ENCODE measurements at regions of chr17 and their contacts with region 1.

Region 1: DNA sequence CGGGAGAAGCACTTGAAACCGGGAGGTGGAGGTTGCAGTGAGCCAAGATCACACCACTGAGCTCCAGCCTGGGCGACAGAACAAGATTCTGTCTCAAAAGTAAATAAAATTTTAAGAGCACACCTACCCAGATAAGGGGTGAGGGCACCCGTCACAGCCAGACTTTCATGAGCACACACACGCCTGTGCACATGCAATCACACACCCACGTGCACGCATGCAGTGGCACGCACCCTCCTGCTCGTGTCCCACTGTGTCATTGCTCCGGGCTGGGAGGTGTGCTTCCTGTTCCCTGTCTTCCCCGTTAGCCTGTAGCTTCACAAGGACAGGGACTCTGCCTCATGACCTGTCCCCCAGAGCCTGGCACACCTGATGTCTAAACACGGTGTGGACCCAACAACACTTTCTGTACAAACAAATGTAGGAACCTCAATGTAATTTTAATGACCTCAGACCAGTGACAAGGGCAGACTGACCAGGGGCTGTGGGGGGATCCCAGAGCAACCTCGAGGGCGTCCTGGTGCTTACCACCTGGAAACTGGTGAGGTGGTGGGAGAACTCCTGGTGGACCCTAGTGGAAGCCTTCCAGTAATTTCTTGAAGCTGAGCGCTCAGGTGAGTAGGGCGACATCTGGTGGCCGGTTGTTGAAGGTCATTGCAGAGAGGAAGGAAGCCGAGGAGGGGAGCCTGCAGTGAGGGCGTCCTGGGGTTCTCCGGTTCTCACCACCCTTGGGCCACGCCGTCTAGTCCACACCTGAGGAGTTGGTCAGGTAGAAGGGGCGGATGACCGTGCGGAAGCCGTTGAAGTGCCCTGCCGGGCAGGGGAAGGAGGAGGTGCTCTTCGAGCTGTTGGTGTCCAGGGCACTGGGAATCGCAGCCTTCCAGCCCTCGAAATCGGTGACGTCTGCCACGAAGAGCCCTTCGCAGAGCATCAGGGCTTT is 8.6 kb downstream of the LGALS3BP start:
- DNase-seq: peak; percentile 91
- ATAC-seq: peak; percentile 61
- H3K4me3 ChIP-seq: no peak overlapping the region
- H3K27ac ChIP-seq: no peak overlapping the region
- H3K4me1 ChIP-seq: peaks cover 8% of the 10 kb centered on the region
- H3K27me3 ChIP-seq: no peaks in the 10 kb centered on the region
- CTCF ChIP-seq: peak; percentile 97

Region 2: GRCh38 chr17:78745407-78746088 is 225.6 kb before region 1 on chr17:
- CTCF ChIA-PET with region 1: no interaction called
- POLR2A ChIA-PET with region 1: no interaction called
- intact Hi-C with region 1: no loop called
- DNase-seq: peak; percentile 65
- ATAC-seq: peak; percentile 18
- H3K4me3 ChIP-seq: no peak overlapping the region
- H3K27ac ChIP-seq: no peak overlapping the region
- H3K4me1 ChIP-seq: peaks cover 11% of the 10 kb centered on the region
- H3K27me3 ChIP-seq: no peaks in the 10 kb centered on the region
- CTCF ChIP-seq: peak; percentile 79

Region 3: DNA sequence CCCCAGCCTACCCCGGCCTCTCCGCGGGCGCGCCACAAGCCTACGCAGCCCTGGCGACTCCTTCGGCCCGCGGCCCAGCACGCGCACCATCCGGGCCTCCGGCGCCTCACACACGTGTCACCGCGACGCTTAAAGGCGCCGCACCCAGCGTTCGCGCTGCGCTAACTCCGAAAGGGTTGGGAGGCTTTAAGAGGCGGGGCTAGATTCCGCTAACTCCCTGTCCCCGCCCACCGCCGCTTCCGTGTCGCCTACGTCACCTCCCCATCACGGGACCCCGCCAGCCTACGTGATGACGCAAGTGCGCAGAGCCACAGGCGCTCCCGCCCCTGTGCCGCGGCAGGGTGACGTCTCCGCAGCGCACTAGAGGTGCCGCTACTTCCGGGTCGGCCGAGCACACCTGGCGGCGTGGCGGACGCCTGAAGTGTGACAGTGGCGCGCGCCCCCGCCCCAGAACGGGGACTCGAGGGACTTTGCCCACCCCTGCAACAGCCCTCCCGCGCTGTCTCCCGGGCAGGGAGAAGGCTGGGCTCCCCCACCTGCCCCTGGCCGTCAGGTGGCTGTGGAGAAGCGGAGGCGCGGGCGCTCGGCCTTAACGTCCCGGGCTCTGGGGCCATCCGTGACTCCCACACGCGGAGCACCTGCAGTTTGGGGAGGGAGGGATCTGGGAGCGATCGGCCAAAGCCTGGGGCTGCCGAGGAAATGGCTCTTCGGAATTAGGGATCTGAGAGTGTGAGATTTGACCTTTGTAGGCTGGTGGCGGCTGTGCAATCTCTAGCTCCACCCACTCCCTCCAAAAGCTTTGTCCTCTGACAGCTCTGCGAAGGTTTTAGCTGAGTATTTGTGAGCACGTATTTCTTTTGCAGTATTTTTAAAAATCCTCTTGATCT is 130.1 kb before region 1 on chr17 and contains the start of gene USP36:
- CTCF ChIA-PET with region 1: no interaction called
- POLR2A ChIA-PET with region 1: interaction called, 4 read pairs
- intact Hi-C with region 1: loop called (anchors 1 kb)
- DNase-seq: peak; percentile 100
- ATAC-seq: peak; percentile 82
- H3K4me3 ChIP-seq: peak within 1 kb of the TSS; percentile 77
- H3K27ac ChIP-seq: peak within 1 kb of the TSS; percentile 84
- H3K4me1 ChIP-seq: peaks cover 39% of the 10 kb centered on the region
- H3K27me3 ChIP-seq: no peaks in the 10 kb centered on the region
- CTCF ChIP-seq: no peak
- total RNA-seq, gene USP36: 37.5 and 41.8 TPM in 2 replicates

Region 4: DNA sequence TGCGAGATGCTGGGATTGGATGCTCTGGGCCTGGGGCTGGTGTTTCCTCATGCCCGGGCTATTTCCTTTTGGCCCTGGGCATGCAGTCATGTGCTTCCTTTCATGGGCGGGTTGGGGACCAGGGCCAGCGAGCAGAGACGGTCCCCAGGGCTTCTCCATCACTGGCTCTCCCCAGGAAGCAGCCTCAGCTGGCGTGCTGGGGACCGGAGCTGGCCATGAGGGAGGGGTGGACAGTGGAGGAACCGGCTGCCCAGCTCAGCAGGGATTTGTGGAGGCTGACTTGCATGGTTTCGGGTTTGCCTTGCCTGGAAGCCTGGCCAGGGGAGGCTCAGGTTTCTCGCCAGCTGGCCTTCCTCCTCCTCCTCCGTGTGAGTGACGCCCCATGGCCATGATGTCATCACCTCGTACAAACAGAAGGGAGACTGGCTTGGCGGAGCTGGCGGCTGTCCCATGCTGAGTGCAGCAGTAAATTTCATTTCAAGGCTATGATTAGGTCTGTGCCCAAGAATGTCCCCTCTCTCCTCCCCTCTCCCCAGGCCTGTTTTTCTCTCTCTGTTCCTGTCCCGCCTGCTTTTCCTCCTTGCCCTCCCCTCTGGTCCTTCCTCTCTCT is 37.0 kb before region 1 on chr17:
- CTCF ChIA-PET with region 1: no interaction called
- POLR2A ChIA-PET with region 1: no interaction called
- intact Hi-C with region 1: loop called (anchors 5 kb)
- DNase-seq: peak; percentile 95
- ATAC-seq: peak; percentile 64
- H3K4me3 ChIP-seq: peak overlapping the region; percentile 16
- H3K27ac ChIP-seq: peak overlapping the region; percentile 89
- H3K4me1 ChIP-seq: peaks cover 42% of the 10 kb centered on the region
- H3K27me3 ChIP-seq: no peaks in the 10 kb centered on the region
- CTCF ChIP-seq: no peak

Region 5: GRCh38 chr17:78986048-78986648 is 15.0 kb after region 1 on chr17:
- CTCF ChIA-PET with region 1: no interaction called
- POLR2A ChIA-PET with region 1: no interaction called
- intact Hi-C with region 1: loop called (anchors 1 kb)
- DNase-seq: peak; percentile 42
- ATAC-seq: peak; percentile 32
- H3K4me3 ChIP-seq: peak overlapping the region; percentile 55
- H3K27ac ChIP-seq: peak overlapping the region; percentile 69
- H3K4me1 ChIP-seq: peaks cover 31% of the 10 kb centered on the region
- H3K27me3 ChIP-seq: no peaks in the 10 kb centered on the region
- CTCF ChIP-seq: peak; percentile 45

Measured in PC-3 (cell line).